Prostate gland (tissue), 2 donors: ENCODE measurements at regions of chr19 and their contacts with region 1.

Region 1: GRCh38 chr19:12484371-12485051 is at the start of gene ZNF709:
- DNase-seq: peak; percentile 93
- H3K4me3 ChIP-seq: peak within 1 kb of the TSS; percentile 86 to 99
- H3K27ac ChIP-seq: peak within 1 kb of the TSS; percentile 75 to 83
- H3K4me1 ChIP-seq: no peaks in the 10 kb centered on the region
- H3K27me3 ChIP-seq: no peaks in the 10 kb centered on the region
- CTCF ChIP-seq: no peak
- POLR2A ChIP-seq: peak; percentile 81
- total RNA-seq, gene ZNF709: 3.9 to 5.4 TPM

Region 2: DNA sequence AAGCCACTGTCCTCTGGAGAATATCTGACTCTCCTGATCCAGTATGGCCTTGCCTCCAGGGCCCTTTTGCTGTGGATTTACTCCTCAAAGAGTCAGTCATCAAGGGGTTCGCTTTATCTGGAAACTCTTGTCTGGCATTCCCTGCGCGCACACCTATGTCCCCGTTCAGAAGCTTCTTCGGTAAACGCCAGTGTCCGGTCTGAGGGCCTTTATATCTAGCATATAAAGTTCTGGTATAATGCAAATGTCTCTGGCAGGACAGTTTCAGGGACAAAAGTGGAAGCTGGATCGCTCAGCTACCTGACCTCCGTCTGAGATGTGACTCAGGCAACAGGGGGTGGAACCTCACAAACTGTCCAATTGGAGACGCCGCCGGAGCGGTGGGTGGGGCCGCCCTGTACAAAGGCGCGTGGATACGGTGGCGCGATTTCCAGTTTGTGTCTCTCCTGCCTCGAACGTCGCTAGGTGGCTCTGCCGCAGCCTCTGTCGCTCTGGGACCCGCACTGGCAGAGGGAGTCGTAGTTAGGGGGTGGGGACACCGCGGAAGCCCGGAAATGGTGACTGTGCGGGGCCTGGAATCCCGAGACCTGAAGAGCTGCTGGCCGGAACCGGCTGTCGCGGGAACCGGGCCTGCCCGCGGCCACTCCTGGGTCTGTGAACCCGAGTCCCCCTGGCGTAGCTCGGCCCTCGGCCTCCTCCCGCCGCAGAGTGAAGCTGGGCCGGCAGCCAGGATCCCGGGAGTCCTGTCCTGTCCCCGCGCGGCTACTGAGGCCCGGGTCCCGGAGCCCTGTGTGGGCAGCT is 10.7 kb after region 1 on chr19:
- intact Hi-C with region 1: loop called (anchors 1 kb)
- DNase-seq: peak; percentile 97
- H3K4me3 ChIP-seq: peak overlapping the region; percentile 49 to 74
- H3K27ac ChIP-seq: peak overlapping the region; percentile 88 to 93
- H3K4me1 ChIP-seq: no peaks in the 10 kb centered on the region
- H3K27me3 ChIP-seq: no peaks in the 10 kb centered on the region
- CTCF ChIP-seq: peak in 3 of 4 experiments; percentile 53 to 60 (median 55)
- POLR2A ChIP-seq: peak; percentile 83